Mammary epithelial cell (primary cell): ENCODE measurements at regions of chr1 and their contacts with region 1.

Region 1: DNA sequence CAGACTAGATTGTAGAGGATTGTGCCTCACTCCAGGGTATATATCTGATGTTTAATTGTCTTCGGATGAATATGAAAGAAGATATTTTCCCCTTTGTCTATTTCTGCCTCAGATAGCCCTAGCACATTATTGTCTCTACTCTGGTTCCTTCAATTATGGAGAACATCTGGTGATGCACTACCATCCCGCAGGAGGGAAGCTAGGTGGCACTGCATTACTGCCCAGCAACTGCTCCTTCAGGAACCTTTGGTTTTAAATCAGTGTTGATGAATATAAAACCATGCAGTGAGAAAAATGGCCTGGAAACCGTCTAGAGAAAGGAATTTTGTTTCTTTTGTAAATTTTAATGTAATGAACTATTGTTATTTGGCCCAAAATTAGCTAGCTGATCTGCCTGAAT is 68.5 kb downstream of the GPR88 start:
- DNase-seq: peak; percentile 51
- H3K4me3 ChIP-seq: no peak overlapping the region
- H3K27ac ChIP-seq: no peak overlapping the region
- H3K4me1 ChIP-seq: peaks cover 10% of the 10 kb centered on the region
- H3K27me3 ChIP-seq: no peaks in the 10 kb centered on the region
- CTCF ChIP-seq: peak; percentile 77 to 95

Region 2: DNA sequence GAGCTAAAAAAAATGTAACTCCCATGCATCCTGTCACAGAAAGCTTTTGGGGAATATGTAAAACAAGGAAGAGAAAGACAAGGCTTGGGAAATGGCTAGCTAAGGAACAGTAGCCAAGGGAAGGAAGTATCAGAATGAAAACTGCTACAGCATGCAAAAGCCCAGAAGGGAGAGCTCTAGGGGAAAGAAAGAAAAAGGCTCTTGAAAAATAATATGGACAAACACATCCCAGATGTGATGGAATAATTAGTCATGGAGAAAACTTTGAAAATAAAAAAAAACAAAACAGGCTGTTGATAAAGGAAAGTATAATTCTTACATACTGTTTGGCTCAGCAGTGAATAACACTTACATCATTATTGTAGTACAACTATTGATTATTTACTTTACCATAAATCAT is 65.2 kb after region 1 on chr1:
- CTCF ChIA-PET with region 1: no interaction called
- dilution Hi-C with region 1: no loop called
- in situ Hi-C with region 1: no loop called
- intact Hi-C with region 1: loop called (anchors 1 kb)
- DNase-seq: peak; percentile 34
- H3K4me3 ChIP-seq: no peak overlapping the region
- H3K27ac ChIP-seq: no peak overlapping the region
- H3K4me1 ChIP-seq: no peaks in the 10 kb centered on the region
- H3K27me3 ChIP-seq: no peaks in the 10 kb centered on the region
- CTCF ChIP-seq: peak in 1 of 2 donors; percentile 23

Region 3: DNA sequence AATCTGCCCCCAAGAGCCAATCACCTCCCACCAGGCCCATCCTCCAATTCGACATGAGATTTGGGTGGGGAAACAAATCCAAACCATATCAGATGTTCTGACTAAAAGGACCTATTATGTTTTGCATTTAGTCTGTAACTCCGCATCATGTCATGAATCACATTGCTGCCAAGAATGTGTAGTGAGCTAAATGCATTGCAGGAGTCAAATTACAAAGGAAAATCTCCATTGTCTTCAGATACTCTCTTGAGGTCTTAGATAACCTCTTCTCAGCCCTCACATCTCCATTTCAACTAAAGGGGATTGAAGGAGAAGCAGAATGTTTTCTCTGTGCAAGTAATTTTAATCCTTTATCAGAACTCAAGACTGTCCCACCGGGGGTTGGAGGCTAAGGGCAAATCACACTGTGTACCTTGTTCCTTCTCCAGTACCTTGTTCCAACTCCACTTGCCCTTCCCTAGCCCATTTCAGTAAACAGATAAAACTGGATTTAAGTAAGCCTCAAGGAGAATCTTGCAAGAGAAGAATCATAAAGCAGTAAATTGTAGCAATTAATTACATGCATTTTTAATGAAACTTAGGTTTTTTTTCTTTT is 254.1 kb after region 1 on chr1:
- CTCF ChIA-PET with region 1: no interaction called
- dilution Hi-C with region 1: no loop called
- in situ Hi-C with region 1: loop called (anchors 5 kb)
- intact Hi-C with region 1: no loop called
- DNase-seq: peak; percentile 55
- H3K4me3 ChIP-seq: no peak overlapping the region
- H3K27ac ChIP-seq: no peak overlapping the region
- H3K4me1 ChIP-seq: peaks cover 20% of the 10 kb centered on the region
- H3K27me3 ChIP-seq: no peaks in the 10 kb centered on the region
- CTCF ChIP-seq: no peak